ENCODE measurements at regions of chr6 and their contacts with region 1.

Region 1: DNA sequence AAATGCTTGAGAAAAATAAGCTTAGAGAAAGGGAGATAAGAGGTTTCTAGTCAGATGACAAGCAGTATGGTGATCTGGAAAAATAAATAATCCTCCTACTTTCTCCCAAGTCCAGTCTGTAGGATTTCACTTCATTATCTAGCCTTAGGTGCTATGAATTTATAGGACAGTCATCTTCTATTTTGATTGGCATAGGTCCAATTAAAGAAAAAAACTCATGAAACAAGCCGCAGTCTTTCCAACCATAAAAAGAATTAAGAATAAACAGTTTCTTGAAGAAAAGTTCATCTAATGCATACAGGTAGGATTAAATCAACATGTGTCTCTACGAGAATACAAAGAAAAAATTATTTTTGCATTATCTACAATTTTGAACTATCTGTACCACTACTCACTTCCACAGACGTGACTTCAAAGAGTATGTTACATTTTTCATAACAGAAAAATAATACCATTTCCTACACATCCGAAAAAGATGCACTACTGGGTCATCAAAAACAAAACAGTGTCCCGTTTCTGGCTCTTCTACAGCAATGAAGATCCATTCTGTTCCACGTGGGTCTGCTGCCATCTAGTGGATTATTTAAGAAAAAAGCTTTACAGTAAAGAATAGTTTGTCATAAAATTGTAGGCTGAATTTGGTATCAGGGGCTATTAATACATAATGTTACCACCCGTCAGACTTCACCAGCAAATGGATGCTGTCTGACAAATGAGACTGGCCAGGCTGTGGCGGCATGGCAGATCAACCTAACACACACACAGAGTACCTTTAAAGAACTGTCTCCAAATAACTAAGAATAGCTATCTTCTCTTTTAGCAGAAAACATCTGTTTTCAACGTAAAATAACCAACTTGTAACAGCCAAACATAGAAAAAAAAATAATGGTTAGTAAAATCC is 28.9 kb downstream of the STX7 start:
- DNase-seq: peak; percentile 28 to 68 (median 46)
- H3K4me3 ChIP-seq: no peak overlapping the region
- H3K27ac ChIP-seq: no peak overlapping the region
- H3K4me1 ChIP-seq: peaks cover 0 to 10% of the 10 kb centered on the region in 2 donors
- H3K27me3 ChIP-seq: no peaks in the 10 kb centered on the region
- CTCF ChIP-seq: peak; percentile 73 to 89 (median 84)
- POLR2A ChIP-seq: no peak

Region 2: DNA sequence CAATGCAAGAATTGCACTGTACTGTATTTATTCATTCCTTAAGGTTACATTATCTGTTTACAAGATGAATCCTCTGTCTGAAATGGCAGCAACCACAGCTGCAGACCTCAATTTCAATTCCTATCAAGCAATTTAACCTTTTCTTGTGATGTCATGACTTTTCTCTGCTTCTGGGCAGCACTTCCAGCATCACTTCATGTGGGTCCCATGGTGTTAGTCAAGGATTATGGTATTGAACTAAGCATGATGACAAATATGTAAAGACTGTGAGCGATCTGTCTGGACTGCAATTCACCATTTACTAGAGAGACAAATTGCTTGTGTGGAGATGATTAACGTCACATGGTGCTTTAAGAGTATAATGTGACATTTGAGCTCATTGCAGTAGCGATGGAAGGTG is 442.3 kb before region 1 on chr6:
- intact Hi-C with region 1: no loop called
- DNase-seq: no peak
- H3K4me3 ChIP-seq: no peak overlapping the region
- H3K27ac ChIP-seq: no peak overlapping the region
- H3K4me1 ChIP-seq: no peaks in the 10 kb centered on the region
- H3K27me3 ChIP-seq: no peaks in the 10 kb centered on the region
- CTCF ChIP-seq: no peak
- POLR2A ChIP-seq: no peak

Region 3: GRCh38 chr6:132279592-132280139 is 204.4 kb before region 1 on chr6:
- intact Hi-C with region 1: loop called (anchors 5 kb)
- DNase-seq: peak; percentile 57 to 89 (median 72)
- H3K4me3 ChIP-seq: peak overlapping the region in 1 of 4 donors; percentile 51
- H3K27ac ChIP-seq: no peak overlapping the region
- H3K4me1 ChIP-seq: no peaks in the 10 kb centered on the region
- H3K27me3 ChIP-seq: peaks cover 8% of the 10 kb centered on the region
- CTCF ChIP-seq: peak; percentile 72 to 99 (median 94)
- POLR2A ChIP-seq: no peak

Region 4: DNA sequence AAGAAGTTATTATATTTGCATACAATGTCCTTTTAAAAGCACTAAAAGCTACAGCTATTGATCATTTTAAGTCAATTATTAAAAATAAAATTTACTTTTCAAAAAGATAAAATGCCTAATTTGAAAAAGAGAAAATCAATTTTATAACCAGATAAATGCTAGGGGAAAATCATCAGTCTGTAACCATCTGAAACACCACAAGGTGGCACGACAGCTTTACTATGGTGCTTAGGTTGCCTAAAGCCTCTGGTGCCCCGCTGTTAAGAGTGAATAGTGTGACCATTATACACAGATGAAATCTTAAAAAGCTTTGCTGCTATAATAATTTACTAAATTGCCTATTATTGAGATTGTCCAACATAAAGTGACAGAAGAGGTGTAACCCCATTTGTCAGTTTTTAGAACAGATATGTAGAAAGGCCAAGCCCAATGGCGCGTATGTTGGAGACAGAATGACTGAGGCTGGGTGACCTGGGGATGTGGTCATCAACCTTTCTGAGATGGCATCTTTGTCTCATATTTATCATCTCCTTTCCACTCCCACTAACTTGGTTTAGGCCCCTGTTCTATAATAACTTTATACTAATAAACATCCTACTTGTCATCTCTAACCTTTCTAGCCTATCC is 183.6 kb before region 1 on chr6:
- intact Hi-C with region 1: loop called in 1 of 2 experiments (anchors 5 kb)
- DNase-seq: peak; percentile 35 to 78 (median 54)
- H3K4me3 ChIP-seq: no peak overlapping the region
- H3K27ac ChIP-seq: no peak overlapping the region
- H3K4me1 ChIP-seq: no peaks in the 10 kb centered on the region
- H3K27me3 ChIP-seq: no peaks in the 10 kb centered on the region
- CTCF ChIP-seq: peak; percentile 55 to 82 (median 77)
- POLR2A ChIP-seq: no peak